Calu3 (cell line): ENCODE measurements at regions of chrX and their contacts with region 1.

Region 1: GRCh38 chrX:41441934-41442823 is 5.0 kb upstream of the NYX start:
- DNase-seq: peak; percentile 92
- H3K4me3 Mint-ChIP-seq: peak overlapping the region; percentile 69
- H3K27ac Mint-ChIP-seq: peak overlapping the region; percentile 79
- H3K4me1 Mint-ChIP-seq: peaks cover 9% of the 10 kb centered on the region
- H3K27me3 Mint-ChIP-seq: no peaks in the 10 kb centered on the region
- CTCF ChIP-seq: peak; percentile 40

Region 2: DNA sequence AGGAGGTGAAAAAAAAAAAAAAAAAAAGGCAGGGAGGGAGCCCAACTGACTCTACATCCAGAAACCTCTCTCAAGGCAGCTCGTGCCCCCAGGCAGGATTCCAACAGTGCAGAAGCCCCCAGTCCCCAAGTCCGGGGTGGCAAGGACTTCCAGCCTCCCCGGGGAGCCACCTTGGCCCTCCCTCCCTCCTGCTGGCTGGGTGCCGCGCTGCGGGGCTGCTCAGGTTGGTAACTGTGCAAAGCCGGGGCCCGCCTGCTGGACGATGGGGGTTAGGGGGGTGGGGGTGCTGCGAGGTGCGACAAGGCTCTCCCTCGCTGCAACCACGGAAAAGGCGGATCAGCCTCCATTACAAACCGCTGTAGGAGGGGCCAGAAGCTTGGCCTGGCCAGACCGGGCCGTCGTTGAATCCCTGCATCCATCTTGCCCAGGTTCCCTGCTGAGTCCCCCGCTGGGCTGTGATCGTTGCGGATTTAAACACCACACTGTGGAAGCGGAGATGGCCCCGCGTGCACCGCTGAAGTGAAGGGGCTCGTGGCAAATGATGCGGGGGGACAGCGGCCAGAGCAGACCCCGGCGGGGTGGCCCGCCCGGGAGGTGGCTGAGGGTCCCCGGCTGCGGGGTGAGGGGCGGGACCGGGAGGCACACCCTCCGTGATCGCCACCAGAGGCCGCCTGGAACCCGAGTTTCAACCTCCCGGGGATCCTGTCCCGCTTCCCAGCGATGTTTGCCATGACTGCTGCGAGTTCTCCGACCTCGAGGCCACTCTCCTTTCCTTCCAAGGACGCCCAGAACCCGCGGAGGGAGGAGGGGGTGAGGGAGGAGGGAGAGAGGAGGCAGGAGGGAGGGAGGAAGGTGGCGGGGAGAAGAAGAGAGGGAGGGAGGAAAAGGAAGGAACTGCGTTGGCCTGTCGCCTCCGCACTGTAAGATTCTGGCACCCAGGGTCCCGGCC is 166.2 kb before region 1 on chrX:
- CTCF ChIA-PET with region 1: no interaction called
- intact Hi-C with region 1: loop called (anchors 5 kb)
- DNase-seq: peak; percentile 78
- H3K4me3 Mint-ChIP-seq: peak overlapping the region; percentile 74
- H3K27ac Mint-ChIP-seq: peak overlapping the region; percentile 42
- H3K4me1 Mint-ChIP-seq: no peaks in the 10 kb centered on the region
- H3K27me3 Mint-ChIP-seq: no peaks in the 10 kb centered on the region
- CTCF ChIP-seq: no peak

Region 3: GRCh38 chrX:41468647-41469323 is 26.6 kb after region 1 on chrX:
- CTCF ChIA-PET with region 1: interaction called, 3 read pairs
- intact Hi-C with region 1: loop called (anchors 2 kb)
- DNase-seq: no peak
- H3K4me3 Mint-ChIP-seq: no peak overlapping the region
- H3K27ac Mint-ChIP-seq: no peak overlapping the region
- H3K4me1 Mint-ChIP-seq: no peaks in the 10 kb centered on the region
- H3K27me3 Mint-ChIP-seq: no peaks in the 10 kb centered on the region
- CTCF ChIP-seq: no peak